Right lobe of liver (tissue), 6 donors: ENCODE measurements at regions of chr1 and their contacts with region 1.

Region 1: DNA sequence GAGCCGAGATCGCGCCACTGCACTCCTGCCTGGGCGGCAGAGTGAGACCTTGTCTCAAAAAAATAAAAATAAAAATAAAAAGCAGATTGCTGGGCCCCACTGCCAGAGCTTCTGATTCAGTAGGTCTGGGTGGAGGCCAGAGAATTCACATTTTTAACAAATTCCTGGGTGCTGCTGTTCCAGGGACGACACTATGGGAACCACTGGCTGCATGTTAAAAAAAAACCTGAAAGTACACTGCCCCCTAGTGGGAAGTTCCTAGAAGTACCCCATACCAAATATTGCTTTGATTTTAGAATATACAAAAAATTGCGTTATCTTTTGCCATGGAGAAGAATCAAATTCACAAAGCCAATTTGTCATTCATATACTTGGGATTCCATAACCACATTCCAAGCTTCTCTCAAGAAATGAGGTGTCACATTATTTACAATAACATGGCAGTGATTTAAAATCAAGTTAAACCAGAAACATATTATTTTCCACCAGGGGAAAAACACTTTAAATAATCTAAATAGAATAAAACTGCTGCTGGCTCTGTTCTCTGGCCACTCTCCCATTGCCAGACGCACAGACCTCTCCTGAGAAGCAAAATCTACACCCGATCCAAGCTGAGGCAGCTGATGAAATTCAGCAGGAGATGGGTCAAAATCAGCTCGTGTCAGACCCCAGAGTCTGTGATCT is 27.4 kb downstream of the SYF2 start:
- DNase-seq: no peak
- ATAC-seq: peak; percentile 71 to 80 (median 76)
- H3K4me3 ChIP-seq: no peak overlapping the region
- H3K27ac ChIP-seq: no peak overlapping the region
- H3K4me1 ChIP-seq: no peaks in the 10 kb centered on the region
- H3K27me3 ChIP-seq: no peaks in the 10 kb centered on the region
- CTCF ChIP-seq: peak; percentile 62 to 81 (median 79)
- POLR2A ChIP-seq: no peak

Region 2: DNA sequence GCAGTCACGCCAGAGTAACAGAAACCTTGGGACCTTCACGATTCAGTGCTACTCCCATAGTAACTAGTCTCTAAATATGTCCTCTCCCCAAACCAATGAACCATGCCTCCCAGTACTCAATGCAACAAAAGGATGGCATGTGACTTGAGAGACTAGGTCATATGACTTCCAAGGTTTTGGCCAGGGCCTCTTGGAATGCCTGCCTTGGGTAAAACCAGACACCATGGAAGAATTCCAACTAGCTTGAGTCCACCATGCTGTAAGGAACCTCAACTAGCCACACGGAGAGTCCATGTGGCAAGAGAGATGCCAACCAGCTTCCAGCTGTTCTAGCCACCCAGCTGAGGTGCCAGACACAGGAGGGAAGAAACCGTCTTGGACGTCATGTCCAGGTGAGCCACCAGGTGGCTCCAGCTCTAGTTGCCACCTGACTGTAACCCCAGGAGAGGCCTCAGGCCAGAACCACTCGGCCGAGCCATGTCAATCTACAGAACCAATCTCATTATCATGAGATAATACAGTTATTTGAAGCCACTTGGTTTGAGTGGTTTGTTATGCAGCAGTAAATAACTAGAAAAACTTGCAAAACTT is 87.6 kb before region 1 on chr1:
- intact Hi-C with region 1: loop called (anchors 5 to 10 kb)
- DNase-seq: peak in 1 of 3 donors; percentile 39
- ATAC-seq: peak; percentile 81 to 89 (median 82)
- H3K4me3 ChIP-seq: no peak overlapping the region
- H3K27ac ChIP-seq: no peak overlapping the region
- H3K4me1 ChIP-seq: no peaks in the 10 kb centered on the region
- H3K27me3 ChIP-seq: no peaks in the 10 kb centered on the region
- CTCF ChIP-seq: peak; percentile 35 to 54 (median 42)
- POLR2A ChIP-seq: no peak

Region 3: GRCh38 chr1:25123551-25123950 is 81.4 kb before region 1 on chr1:
- intact Hi-C with region 1: loop called (anchors 5 to 10 kb)
- DNase-seq: no peak
- ATAC-seq: no peak
- H3K4me3 ChIP-seq: no peak overlapping the region
- H3K27ac ChIP-seq: no peak overlapping the region
- H3K4me1 ChIP-seq: no peaks in the 10 kb centered on the region
- H3K27me3 ChIP-seq: no peaks in the 10 kb centered on the region
- CTCF ChIP-seq: no peak
- POLR2A ChIP-seq: no peak

Region 4: GRCh38 chr1:25161981-25162380 is 43.0 kb before region 1 on chr1:
- intact Hi-C with region 1: no loop called
- DNase-seq: no peak
- ATAC-seq: no peak
- H3K4me3 ChIP-seq: no peak overlapping the region
- H3K27ac ChIP-seq: no peak overlapping the region
- H3K4me1 ChIP-seq: no peaks in the 10 kb centered on the region
- H3K27me3 ChIP-seq: no peaks in the 10 kb centered on the region
- CTCF ChIP-seq: no peak
- POLR2A ChIP-seq: no peak